Stomach (tissue), 19 donors: ENCODE measurements at regions of chr7 and their contacts with region 1.

Region 1: DNA sequence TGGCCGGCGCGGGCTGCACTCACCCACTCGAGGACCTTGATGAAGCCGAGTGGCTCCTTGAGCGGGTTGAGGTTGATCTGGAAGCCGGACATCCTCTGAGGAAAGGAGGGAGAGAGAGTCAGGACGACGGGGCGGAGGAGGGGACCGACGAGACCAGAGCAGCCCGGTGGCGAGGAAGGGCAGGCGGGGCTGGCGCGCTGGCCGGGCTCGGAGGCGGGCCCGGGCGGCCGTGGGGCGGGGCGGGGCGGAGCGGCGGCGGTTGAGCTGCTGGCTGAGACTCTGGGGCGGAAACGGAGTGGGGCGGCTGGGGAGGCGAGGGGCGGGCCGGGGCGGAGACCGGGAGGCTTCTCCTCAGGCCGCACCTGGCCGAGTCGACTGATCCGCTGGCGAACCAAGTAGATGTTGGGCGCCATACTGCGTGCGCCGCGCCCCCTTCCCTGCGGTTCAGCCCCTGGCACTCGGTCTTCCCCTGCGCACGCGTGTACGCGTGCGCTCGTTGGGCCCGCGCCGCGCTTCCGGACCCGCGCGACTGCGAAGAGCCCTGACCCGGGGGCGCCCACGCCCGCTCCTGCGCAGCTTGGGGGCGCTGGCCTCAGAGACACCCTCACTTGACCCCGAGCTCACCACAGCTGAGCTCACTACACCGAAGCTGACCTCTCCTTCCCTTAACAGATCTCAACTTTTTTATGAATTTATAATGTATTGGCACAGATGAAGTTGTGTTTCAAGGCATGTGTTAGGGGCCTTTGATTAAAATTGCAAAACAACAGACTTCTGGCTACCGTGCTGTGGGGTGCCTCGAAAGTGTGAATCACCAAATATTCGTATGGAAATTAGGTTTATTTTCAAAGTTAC is at the start of gene SYPL1:
- DNase-seq: peak; percentile 94 to 98
- H3K4me3 ChIP-seq: peak within 1 kb of the TSS; percentile 54 to 81 (median 70)
- H3K27ac ChIP-seq: peak within 1 kb of the TSS; percentile 97 to 99 (median 99)
- H3K4me1 ChIP-seq: peaks cover 33 to 45% (median 38%) of the 10 kb centered on the region in 4 donors
- H3K27me3 ChIP-seq: no peaks in the 10 kb centered on the region
- CTCF ChIP-seq: peak in 1 of 7 experiments; percentile 11
- EP300 ChIP-seq: no peak
- POLR2A ChIP-seq: no peak
- total RNA-seq, gene SYPL1: 5.2 to 157 (median 103) TPM

Region 2: GRCh38 chr7:106064771-106065585 is 47.4 kb before region 1 on chr7:
- intact Hi-C with region 1: loop called (anchors 10 kb)
- DNase-seq: peak; percentile 88 to 90
- H3K4me3 ChIP-seq: peak overlapping the region; percentile 23 to 32 (median 26)
- H3K27ac ChIP-seq: peak overlapping the region; percentile 77 to 92 (median 84)
- H3K4me1 ChIP-seq: peaks cover 47 to 70% (median 55%) of the 10 kb centered on the region in 4 donors
- H3K27me3 ChIP-seq: no peaks in the 10 kb centered on the region
- CTCF ChIP-seq: no peak
- EP300 ChIP-seq: peak; percentile 2
- POLR2A ChIP-seq: no peak